K562 (cell line): ENCODE measurements at regions of chr5 and their contacts with region 1.

Region 1: GRCh38 chr5:89277816-89278215 is 394.8 kb upstream of the MEF2C start:
- DNase-seq: no peak
- ATAC-seq: no peak
- H3K4me3 ChIP-seq: no peak overlapping the region
- H3K27ac ChIP-seq: no peak overlapping the region
- H3K4me1 ChIP-seq: peaks cover 0 to 22% of the 10 kb centered on the region in 2 experiments; a peak in 3 of 5 replicates
- H3K27me3 ChIP-seq: no peaks in the 10 kb centered on the region
- CTCF ChIP-seq: no peak
- EP300 ChIP-seq: no peak
- POLR2A ChIP-seq: no peak
- RAD21 ChIP-seq: no peak

Region 2: GRCh38 chr5:89396278-89396954 is 118.6 kb after region 1 on chr5:
- CTCF ChIA-PET with region 1: no interaction called
- POLR2A ChIA-PET with region 1: no interaction called
- in situ Hi-C with region 1: no loop called
- intact Hi-C with region 1: loop called (anchors 5 kb)
- DNase-seq: peak in 2 of 4 experiments; percentile 47 to 74
- ATAC-seq: peak; percentile 91
- H3K4me3 ChIP-seq: no peak overlapping the region
- H3K27ac ChIP-seq: peak overlapping the region; percentile 69
- H3K4me1 ChIP-seq: peaks cover 0 to 19% of the 10 kb centered on the region in 2 experiments; a peak in 3 of 5 replicates
- H3K27me3 ChIP-seq: no peaks in the 10 kb centered on the region
- CTCF ChIP-seq: no peak
- EP300 ChIP-seq: peak; percentile 47
- POLR2A ChIP-seq: no peak
- RAD21 ChIP-seq: no peak